Activated CD4-positive, alpha-beta memory T cell treated with anti-CD3 and anti-CD28 coated beads, Interleukin-2, amount 10 ng/mL, durations not matched to agents 7 days and 5 days (primary cell): ENCODE measurements at regions of chr5 and their contacts with region 1.

Region 1: GRCh38 chr5:160439205-160439600 is 17.5 kb downstream of the PTTG1 start:
- DNase-seq: peak; percentile 89
- H3K4me3 Mint-ChIP-seq: peak overlapping the region; percentile 81
- H3K27ac Mint-ChIP-seq: peak overlapping the region; percentile 83
- H3K4me1 Mint-ChIP-seq: peaks cover 36% of the 10 kb centered on the region
- H3K27me3 Mint-ChIP-seq: peaks cover 10% of the 10 kb centered on the region

Region 2: GRCh38 chr5:160230686-160231527 is 208.3 kb before region 1 on chr5:
- CTCF ChIA-PET with region 1: no interaction called
- POLR2A ChIA-PET with region 1: no interaction called
- DNase-seq: peak; percentile 20
- H3K4me3 Mint-ChIP-seq: no peak overlapping the region
- H3K27ac Mint-ChIP-seq: no peak overlapping the region
- H3K4me1 Mint-ChIP-seq: no peaks in the 10 kb centered on the region
- H3K27me3 Mint-ChIP-seq: no peaks in the 10 kb centered on the region

Region 3: DNA sequence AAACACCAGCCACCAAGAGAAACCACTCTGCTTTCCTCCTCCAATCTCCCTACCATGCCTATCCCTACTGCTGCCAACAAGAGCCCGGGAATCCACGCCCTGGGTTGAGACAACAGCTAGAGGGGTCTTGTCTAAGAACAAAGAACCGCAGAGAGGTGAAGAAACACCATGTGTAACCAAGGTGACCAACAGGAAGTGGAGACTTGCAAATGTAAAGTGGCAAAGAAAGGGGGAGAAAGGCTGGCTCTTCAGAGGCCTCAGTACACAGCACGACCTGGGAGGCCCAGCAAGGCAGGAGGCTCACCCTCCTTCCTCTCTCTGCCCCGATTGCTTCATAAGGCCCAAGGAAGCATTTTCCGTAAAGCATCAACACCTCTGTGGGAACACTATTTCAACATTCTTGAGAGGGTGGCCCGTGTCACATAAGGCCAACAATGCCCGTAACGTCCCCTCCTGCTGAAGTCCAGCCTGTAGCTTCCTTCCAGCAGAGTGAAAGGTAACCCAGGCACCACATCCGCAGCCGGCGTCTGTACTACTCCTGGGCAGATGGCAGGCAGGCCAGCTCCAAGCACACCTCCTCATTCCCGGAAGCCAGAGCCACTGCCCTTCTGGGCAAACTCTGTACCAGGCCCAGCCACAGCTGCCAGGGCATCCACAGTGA is 145.2 kb before region 1 on chr5:
- CTCF ChIA-PET with region 1: no interaction called
- POLR2A ChIA-PET with region 1: no interaction called
- DNase-seq: no peak
- H3K4me3 Mint-ChIP-seq: no peak overlapping the region
- H3K27ac Mint-ChIP-seq: no peak overlapping the region
- H3K4me1 Mint-ChIP-seq: no peaks in the 10 kb centered on the region
- H3K27me3 Mint-ChIP-seq: peaks cover 8% of the 10 kb centered on the region

Region 4: GRCh38 chr5:160418561-160419457 is 20.4 kb before region 1 on chr5 and contains the start of gene SLU7:
- CTCF ChIA-PET with region 1: interaction called, 161 read pairs
- POLR2A ChIA-PET with region 1: interaction called, 23 read pairs
- DNase-seq: peak; percentile 94
- H3K4me3 Mint-ChIP-seq: peak within 1 kb of the TSS; percentile 90
- H3K27ac Mint-ChIP-seq: peak within 1 kb of the TSS; percentile 91
- H3K4me1 Mint-ChIP-seq: peaks cover 59% of the 10 kb centered on the region
- H3K27me3 Mint-ChIP-seq: no peaks in the 10 kb centered on the region
- total RNA-seq, gene SLU7: 65.5 to 72.7 TPM

Region 5: DNA sequence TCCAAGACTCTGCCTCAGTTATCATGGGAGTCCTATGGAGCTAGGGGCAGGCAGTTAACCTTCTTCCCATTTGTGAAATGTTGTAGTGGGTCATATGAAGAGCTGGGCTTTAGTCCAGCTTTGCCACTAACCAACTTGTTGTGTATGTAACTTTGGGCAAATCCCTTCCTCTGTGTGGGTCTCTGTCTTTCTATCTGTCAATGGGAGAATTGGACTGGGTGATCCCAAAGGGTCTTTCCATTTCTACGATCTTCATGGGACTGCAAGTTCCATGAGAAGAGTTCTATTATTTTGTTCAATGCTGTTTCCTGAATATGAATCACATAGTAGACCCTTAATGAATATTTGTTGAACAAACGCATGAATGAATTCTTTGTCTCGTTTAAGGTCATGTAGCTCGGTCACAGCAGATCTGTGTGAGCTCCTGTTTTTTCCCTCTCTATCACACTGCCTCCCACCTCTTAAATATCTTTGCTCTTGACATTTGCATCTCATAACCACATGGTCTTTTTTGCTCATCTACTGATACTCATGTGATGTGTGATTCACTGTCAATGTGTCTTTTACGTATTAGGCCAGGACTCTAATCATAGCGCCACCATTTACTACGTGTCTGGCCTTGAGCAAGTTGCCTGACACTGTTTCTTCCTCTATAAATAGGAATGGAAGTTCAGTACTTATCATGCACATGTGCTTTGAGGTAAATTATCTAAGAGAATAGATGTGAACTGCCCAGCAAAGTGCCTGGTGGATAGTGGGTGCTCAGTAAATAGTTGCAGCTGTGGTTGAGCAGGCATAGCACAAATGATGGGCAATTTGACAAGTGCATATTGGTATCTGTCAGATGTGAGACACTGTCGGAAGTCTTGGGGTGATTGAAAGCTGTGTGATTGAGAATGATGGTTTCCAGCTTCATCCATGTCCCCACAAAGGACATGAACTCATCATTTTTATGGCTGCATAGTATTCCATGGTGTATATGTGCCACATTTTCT is 19.9 kb after region 1 on chr5:
- CTCF ChIA-PET with region 1: interaction called, 185 read pairs
- POLR2A ChIA-PET with region 1: interaction called, 5 read pairs
- DNase-seq: no peak
- H3K4me3 Mint-ChIP-seq: no peak overlapping the region
- H3K27ac Mint-ChIP-seq: no peak overlapping the region
- H3K4me1 Mint-ChIP-seq: peaks cover 22% of the 10 kb centered on the region
- H3K27me3 Mint-ChIP-seq: no peaks in the 10 kb centered on the region

Region 6: DNA sequence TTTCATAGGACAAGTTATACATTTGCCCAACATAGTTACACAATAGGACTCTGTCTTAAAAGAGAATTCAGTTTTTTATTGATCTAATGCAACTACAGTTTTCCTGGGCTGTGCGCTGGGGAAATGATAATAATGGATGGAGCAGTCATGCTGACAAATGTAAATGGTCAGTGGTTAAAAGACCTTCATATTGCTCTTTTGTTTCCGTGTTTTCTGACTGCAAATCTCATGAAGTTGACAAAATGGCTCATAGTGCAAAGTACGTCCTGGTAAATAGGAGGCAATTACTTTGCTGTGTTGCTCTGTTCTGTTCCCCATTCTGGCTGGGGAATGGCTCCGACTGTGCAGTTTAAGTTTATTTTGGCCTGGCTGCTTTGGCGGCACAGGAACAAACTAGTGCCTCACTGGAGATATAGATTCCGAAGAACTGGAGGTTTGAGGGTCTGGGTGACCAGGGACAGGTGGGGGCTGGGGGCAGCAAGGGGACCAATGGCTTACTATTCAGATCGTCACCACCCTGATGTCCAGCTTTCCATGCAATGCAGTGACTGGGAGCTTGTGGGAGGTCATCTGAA is 36.7 kb after region 1 on chr5:
- CTCF ChIA-PET with region 1: interaction called, 185 read pairs
- POLR2A ChIA-PET with region 1: interaction called, 22 read pairs
- DNase-seq: no peak
- H3K4me3 Mint-ChIP-seq: peak overlapping the region; percentile 50
- H3K27ac Mint-ChIP-seq: peak overlapping the region; percentile 62
- H3K4me1 Mint-ChIP-seq: peaks cover 91% of the 10 kb centered on the region
- H3K27me3 Mint-ChIP-seq: no peaks in the 10 kb centered on the region

Region 7: GRCh38 chr5:160493806-160494338 is 54.7 kb after region 1 on chr5:
- CTCF ChIA-PET with region 1: interaction called, 18 read pairs
- POLR2A ChIA-PET with region 1: interaction called, 3 read pairs
- DNase-seq: no peak
- H3K4me3 Mint-ChIP-seq: no peak overlapping the region
- H3K27ac Mint-ChIP-seq: no peak overlapping the region
- H3K4me1 Mint-ChIP-seq: peaks cover 29% of the 10 kb centered on the region
- H3K27me3 Mint-ChIP-seq: no peaks in the 10 kb centered on the region

Region 8: DNA sequence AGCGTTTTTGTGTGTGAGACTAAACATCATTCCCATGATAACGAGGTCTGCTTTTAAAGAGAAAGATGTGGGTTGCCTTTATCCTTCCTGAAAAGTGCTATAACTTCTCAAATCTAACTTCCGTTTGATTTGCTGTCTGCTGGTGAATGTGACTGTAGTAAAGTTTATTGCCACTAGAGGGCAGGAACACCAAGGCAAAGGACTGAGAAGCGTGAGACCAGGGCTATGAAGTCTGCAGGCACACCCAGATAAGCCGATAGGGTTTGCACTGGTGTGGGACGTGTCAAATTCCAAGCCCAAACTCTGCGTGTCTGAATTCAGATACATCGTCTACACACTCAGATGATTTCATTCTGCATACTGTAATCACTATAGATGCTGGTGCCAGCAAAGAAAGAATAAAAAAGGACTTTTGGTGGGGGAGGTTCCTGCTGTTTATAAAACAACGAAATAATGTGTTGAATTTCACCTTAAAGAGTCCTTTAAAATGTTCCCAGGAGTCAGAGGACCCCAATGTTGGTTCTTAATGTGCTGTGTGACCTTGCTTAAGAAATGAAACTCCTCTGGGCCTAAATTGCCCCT is 69.7 kb after region 1 on chr5:
- CTCF ChIA-PET with region 1: interaction called, 157 read pairs
- POLR2A ChIA-PET with region 1: interaction called, 40 read pairs
- DNase-seq: peak; percentile 75
- H3K4me3 Mint-ChIP-seq: no peak overlapping the region
- H3K27ac Mint-ChIP-seq: peak overlapping the region; percentile 24
- H3K4me1 Mint-ChIP-seq: peaks cover 51% of the 10 kb centered on the region
- H3K27me3 Mint-ChIP-seq: peaks cover 9% of the 10 kb centered on the region